IMR-90 (cell line): ENCODE measurements at regions of chr12 and their contacts with region 1.

Region 1: GRCh38 chr12:25436203-25437030 is 116.7 kb downstream of the LMNTD1 start:
- DNase-seq: peak; percentile 89
- ATAC-seq: peak; percentile 40
- H3K4me3 ChIP-seq: peak overlapping the region; percentile 21; the same call in 1 of the 2 replicates
- H3K27ac ChIP-seq: peak overlapping the region; percentile 75
- H3K4me1 ChIP-seq: peaks cover 17% of the 10 kb centered on the region
- H3K27me3 ChIP-seq: no peaks in the 10 kb centered on the region
- CTCF ChIP-seq: peak; percentile 93
- POLR2A ChIP-seq: peak; percentile 29; the same call in 1 of the 2 replicates
- RAD21 ChIP-seq: peak; percentile 92

Region 2: DNA sequence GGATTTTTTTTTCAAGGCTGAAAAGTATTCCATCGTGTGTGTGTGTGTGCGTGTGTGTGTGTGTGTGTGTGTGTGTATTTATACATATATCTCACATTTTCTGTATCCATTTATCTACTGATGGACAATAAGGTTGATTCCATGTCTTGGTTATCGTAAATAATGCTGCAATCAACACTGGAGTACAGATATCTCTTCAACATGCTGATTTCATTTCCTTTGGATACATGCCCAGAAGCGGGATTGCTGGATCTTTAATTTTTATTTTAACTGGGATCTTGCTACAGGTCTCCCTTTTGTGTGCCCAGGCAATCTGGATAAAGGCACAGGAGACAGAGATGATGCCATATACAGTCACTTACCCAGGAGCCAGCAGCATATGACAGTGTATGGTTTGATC is 1825.1 kb before region 1 on chr12:
- CTCF ChIA-PET with region 1: no interaction called
- POLR2A ChIA-PET with region 1: no interaction called
- dilution Hi-C with region 1: no loop called
- in situ Hi-C with region 1: no loop called
- intact Hi-C with region 1: no loop called
- DNase-seq: peak; percentile 40
- ATAC-seq: peak; percentile 14
- H3K4me3 ChIP-seq: no peak overlapping the region
- H3K27ac ChIP-seq: no peak overlapping the region
- H3K4me1 ChIP-seq: no peaks in the 10 kb centered on the region
- H3K27me3 ChIP-seq: no peaks in the 10 kb centered on the region
- CTCF ChIP-seq: no peak
- POLR2A ChIP-seq: no peak
- RAD21 ChIP-seq: no peak

Region 3: GRCh38 chr12:25557830-25558436 is 121.5 kb after region 1 on chr12:
- CTCF ChIA-PET with region 1: interaction called, 4 read pairs
- POLR2A ChIA-PET with region 1: interaction called, 4 read pairs
- dilution Hi-C with region 1: no loop called
- in situ Hi-C with region 1: no loop called
- intact Hi-C with region 1: loop called (anchors 5 kb)
- DNase-seq: peak; percentile 43
- ATAC-seq: no peak
- H3K4me3 ChIP-seq: no peak overlapping the region
- H3K27ac ChIP-seq: no peak overlapping the region
- H3K4me1 ChIP-seq: peaks cover 2% of the 10 kb centered on the region
- H3K27me3 ChIP-seq: no peaks in the 10 kb centered on the region
- CTCF ChIP-seq: peak; percentile 55
- POLR2A ChIP-seq: no peak
- RAD21 ChIP-seq: peak; percentile 49; the same call in 1 of the 2 replicates

Region 4: DNA sequence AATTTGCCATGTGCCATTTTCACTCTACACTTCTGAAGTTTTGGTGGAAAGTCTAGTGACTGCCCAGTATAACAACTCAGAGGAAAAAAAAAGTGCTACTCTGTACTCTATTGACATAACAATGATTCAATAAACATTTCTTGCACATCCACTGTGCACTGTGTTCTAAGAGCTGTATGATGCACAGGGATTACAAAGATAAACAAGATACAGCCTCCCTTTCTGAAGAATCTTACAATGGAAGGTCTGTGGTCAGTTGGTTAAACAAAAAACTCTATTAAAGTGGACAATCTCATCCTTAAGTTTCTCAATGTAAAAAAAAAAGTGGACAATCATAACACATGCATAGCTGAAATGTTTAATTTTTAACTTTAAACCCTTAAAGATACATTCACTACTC is 416.4 kb after region 1 on chr12:
- CTCF ChIA-PET with region 1: no interaction called
- POLR2A ChIA-PET with region 1: no interaction called
- dilution Hi-C with region 1: no loop called
- in situ Hi-C with region 1: no loop called
- intact Hi-C with region 1: loop called (anchors 5 kb)
- DNase-seq: peak; percentile 95
- ATAC-seq: peak; percentile 91
- H3K4me3 ChIP-seq: no peak overlapping the region
- H3K27ac ChIP-seq: no peak overlapping the region
- H3K4me1 ChIP-seq: peaks cover 9% of the 10 kb centered on the region
- H3K27me3 ChIP-seq: no peaks in the 10 kb centered on the region; the same call in 1 of the 2 replicates
- CTCF ChIP-seq: no peak
- POLR2A ChIP-seq: no peak
- RAD21 ChIP-seq: 0 out of 2 replicates have a peak, but pooled peaks have one; percentile 5

Region 5: GRCh38 chr12:26028953-26029735 is 592.7 kb after region 1 on chr12:
- CTCF ChIA-PET with region 1: no interaction called
- POLR2A ChIA-PET with region 1: no interaction called
- dilution Hi-C with region 1: no loop called
- in situ Hi-C with region 1: loop called (anchors 5 kb)
- intact Hi-C with region 1: loop called (anchors 1 kb)
- DNase-seq: peak; percentile 67
- ATAC-seq: peak; percentile 75
- H3K4me3 ChIP-seq: no peak overlapping the region
- H3K27ac ChIP-seq: no peak overlapping the region
- H3K4me1 ChIP-seq: peaks cover 9% of the 10 kb centered on the region
- H3K27me3 ChIP-seq: no peaks in the 10 kb centered on the region
- CTCF ChIP-seq: peak; percentile 84
- POLR2A ChIP-seq: no peak
- RAD21 ChIP-seq: peak; percentile 82

Region 6: GRCh38 chr12:26091822-26092221 is 655.4 kb after region 1 on chr12:
- CTCF ChIA-PET with region 1: no interaction called
- POLR2A ChIA-PET with region 1: no interaction called
- dilution Hi-C with region 1: no loop called
- in situ Hi-C with region 1: no loop called
- intact Hi-C with region 1: loop called (anchors 5 kb)
- DNase-seq: no peak
- ATAC-seq: 0 out of 2 replicates have a peak, but pooled peaks have one; percentile 48
- H3K4me3 ChIP-seq: no peak overlapping the region
- H3K27ac ChIP-seq: no peak overlapping the region
- H3K4me1 ChIP-seq: peaks cover 4% of the 10 kb centered on the region; the same call in 1 of the 2 replicates
- H3K27me3 ChIP-seq: no peaks in the 10 kb centered on the region
- CTCF ChIP-seq: peak; percentile 35; the same call in 1 of the 2 replicates
- POLR2A ChIP-seq: no peak
- RAD21 ChIP-seq: peak; percentile 43